ENCODE measurements at regions of chr2 and their contacts with region 1.

Region 1: GRCh38 chr2:64865073-64865830 is 123.9 kb upstream of the SLC1A4 start:
- DNase-seq: peak; percentile 75
- H3K4me3 ChIP-seq: peak overlapping the region; percentile 28 to 72 (median 58)
- H3K27ac ChIP-seq: peak overlapping the region; percentile 82 to 90 (median 85)
- H3K4me1 ChIP-seq: peaks cover 2 to 28% (median 16%) of the 10 kb centered on the region in 4 donors
- H3K27me3 ChIP-seq: no peaks in the 10 kb centered on the region
- CTCF ChIP-seq: peak in 4 of 5 experiments; percentile 50 to 85 (median 73)
- EP300 ChIP-seq: no peak
- POLR2A ChIP-seq: no peak

Region 2: DNA sequence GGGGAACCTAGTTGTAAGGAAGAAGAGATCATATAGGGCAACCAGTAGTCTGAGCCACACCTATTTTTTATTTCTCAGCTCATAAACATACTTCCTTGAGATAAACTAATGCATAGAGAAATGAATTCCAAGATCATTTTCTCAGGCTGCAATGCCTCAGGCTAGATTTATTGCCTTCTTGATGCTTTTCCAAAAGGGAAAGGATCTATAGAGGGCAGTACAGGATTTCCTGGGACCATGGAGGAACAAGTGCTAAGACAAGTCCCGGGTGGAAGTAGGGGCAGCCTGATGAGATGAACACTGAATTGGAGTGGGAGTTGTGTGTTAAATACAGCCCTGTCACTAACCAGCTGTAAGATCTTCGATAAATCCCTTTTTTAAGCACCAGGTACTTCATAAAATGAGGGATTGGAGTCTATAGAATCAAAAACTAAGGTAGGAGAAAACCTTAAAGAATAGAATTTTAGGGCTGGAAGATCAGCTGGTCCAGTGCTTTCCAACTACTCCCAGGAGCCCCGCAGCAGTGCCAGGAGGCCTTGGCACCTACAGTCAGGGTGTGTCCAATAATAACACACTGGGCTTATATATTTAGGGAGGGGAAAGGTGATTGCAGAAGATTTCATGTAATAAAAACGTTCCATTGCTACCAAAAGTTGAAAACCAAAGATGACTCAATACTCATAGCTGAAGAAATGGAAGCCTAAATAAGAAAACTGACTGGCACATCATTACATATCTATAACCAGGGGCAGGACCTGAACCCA is 269.7 kb before region 1 on chr2:
- in situ Hi-C with region 1: loop called (anchors 10 kb)
- intact Hi-C with region 1: no loop called
- DNase-seq: peak; percentile 34
- H3K4me3 ChIP-seq: no peak overlapping the region
- H3K27ac ChIP-seq: peak overlapping the region in 3 of 4 donors; percentile 28 to 47 (median 37)
- H3K4me1 ChIP-seq: peaks cover 0 to 32% (median 26%) of the 10 kb centered on the region in 4 donors
- H3K27me3 ChIP-seq: no peaks in the 10 kb centered on the region
- CTCF ChIP-seq: peak; percentile 19 to 42 (median 29)
- EP300 ChIP-seq: no peak
- POLR2A ChIP-seq: no peak

Region 3: DNA sequence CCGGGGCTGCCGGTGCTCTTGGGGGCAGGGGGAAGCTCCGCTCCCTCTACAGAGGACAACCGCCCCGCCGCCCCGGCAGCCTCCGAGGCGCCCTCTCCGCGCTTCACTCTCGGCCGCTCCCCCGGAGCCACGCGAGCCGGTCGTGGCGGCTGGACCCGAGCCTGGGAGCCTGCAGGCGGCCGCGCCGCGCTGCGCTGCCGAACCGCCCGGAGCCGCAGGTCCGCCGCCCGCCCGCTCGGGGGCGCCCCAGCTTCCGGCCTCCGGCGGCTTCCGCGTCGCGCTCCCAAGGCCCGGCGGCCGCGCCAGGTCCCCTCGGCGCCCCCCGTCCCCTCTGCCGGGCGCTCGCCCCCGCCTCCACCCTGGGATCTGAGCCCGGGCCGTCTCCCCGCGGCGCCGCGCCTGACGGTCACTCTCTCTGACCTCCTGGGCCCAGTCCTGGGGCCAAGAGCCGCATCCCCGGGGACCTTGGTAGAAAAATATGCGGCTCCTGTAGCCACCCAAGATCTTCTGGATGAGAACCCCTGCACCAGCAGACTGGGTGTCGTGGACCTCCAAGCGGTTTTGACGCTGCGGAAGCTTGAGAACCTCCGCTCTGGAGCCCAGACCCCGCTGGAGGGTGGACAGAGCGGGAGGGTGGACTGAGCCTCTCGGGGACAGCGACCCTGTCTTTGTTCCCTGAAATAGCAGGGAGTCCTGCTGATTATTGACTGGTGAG is 255.9 kb before region 1 on chr2:
- in situ Hi-C with region 1: loop called in 1 of 4 experiments (anchors 10 kb)
- intact Hi-C with region 1: loop called (anchors 5 kb)
- DNase-seq: peak; percentile 74
- H3K4me3 ChIP-seq: peak overlapping the region; percentile 48 to 68 (median 51)
- H3K27ac ChIP-seq: peak overlapping the region; percentile 53 to 83 (median 76)
- H3K4me1 ChIP-seq: peaks cover 4 to 50% (median 32%) of the 10 kb centered on the region in 4 donors
- H3K27me3 ChIP-seq: no peaks in the 10 kb centered on the region
- CTCF ChIP-seq: peak in 3 of 5 experiments; percentile 21 to 39 (median 27)
- EP300 ChIP-seq: no peak
- POLR2A ChIP-seq: no peak

Region 4: GRCh38 chr2:64644177-64645004 is 220.9 kb before region 1 on chr2:
- in situ Hi-C with region 1: loop called in 1 of 4 experiments (anchors 10 kb)
- intact Hi-C with region 1: no loop called
- DNase-seq: peak; percentile 72
- H3K4me3 ChIP-seq: peak overlapping the region; percentile 17 to 50 (median 30)
- H3K27ac ChIP-seq: peak overlapping the region; percentile 87 to 92 (median 90)
- H3K4me1 ChIP-seq: peaks cover 15 to 77% (median 38%) of the 10 kb centered on the region in 4 donors
- H3K27me3 ChIP-seq: no peaks in the 10 kb centered on the region
- CTCF ChIP-seq: no peak
- EP300 ChIP-seq: no peak
- POLR2A ChIP-seq: peak; percentile 71

Region 5: GRCh38 chr2:64653349-64654062 is 211.7 kb before region 1 on chr2 and contains the start of gene SERTAD2:
- in situ Hi-C with region 1: loop called in 2 of 4 experiments (anchors 5 to 10 kb)
- intact Hi-C with region 1: loop called (anchors 2 kb)
- DNase-seq: peak; percentile 91
- H3K4me3 ChIP-seq: peak within 1 kb of the TSS; percentile 78 to 99 (median 90)
- H3K27ac ChIP-seq: peak within 1 kb of the TSS; percentile 98 to 100 (median 100)
- H3K4me1 ChIP-seq: peaks cover 33 to 51% (median 48%) of the 10 kb centered on the region in 4 donors
- H3K27me3 ChIP-seq: no peaks in the 10 kb centered on the region
- CTCF ChIP-seq: peak in 1 of 5 experiments; percentile 2
- EP300 ChIP-seq: no peak
- POLR2A ChIP-seq: peak; percentile 97
- total RNA-seq, gene SERTAD2: 5.4 to 22.1 (median 13.2) TPM

Measured in transverse colon (tissue), 4 donors.